PC-9 (cell line): ENCODE measurements at regions of chr5 and their contacts with region 1.

Region 1: GRCh38 chr5:149561848-149562247 is 10.6 kb upstream of the CSNK1A1 start:
- DNase-seq: peak; percentile 48 to 95
- H3K4me3 ChIP-seq: peak overlapping the region; percentile 43; the same call in 1 of the 2 replicates
- H3K27ac ChIP-seq: peak overlapping the region; percentile 97
- H3K4me1 ChIP-seq: peaks cover 53% of the 10 kb centered on the region
- H3K27me3 ChIP-seq: no peaks in the 10 kb centered on the region
- CTCF ChIP-seq: no peak

Region 2: GRCh38 chr5:148179234-148179824 is 1382.5 kb before region 1 on chr5:
- CTCF ChIA-PET with region 1: no interaction called
- POLR2A ChIA-PET with region 1: no interaction called
- intact Hi-C with region 1: loop called (anchors 5 kb)
- DNase-seq: peak; percentile 6 to 63
- H3K4me3 ChIP-seq: no peak overlapping the region
- H3K27ac ChIP-seq: no peak overlapping the region
- H3K4me1 ChIP-seq: no peaks in the 10 kb centered on the region
- H3K27me3 ChIP-seq: no peaks in the 10 kb centered on the region
- CTCF ChIP-seq: peak; percentile 84

Region 3: DNA sequence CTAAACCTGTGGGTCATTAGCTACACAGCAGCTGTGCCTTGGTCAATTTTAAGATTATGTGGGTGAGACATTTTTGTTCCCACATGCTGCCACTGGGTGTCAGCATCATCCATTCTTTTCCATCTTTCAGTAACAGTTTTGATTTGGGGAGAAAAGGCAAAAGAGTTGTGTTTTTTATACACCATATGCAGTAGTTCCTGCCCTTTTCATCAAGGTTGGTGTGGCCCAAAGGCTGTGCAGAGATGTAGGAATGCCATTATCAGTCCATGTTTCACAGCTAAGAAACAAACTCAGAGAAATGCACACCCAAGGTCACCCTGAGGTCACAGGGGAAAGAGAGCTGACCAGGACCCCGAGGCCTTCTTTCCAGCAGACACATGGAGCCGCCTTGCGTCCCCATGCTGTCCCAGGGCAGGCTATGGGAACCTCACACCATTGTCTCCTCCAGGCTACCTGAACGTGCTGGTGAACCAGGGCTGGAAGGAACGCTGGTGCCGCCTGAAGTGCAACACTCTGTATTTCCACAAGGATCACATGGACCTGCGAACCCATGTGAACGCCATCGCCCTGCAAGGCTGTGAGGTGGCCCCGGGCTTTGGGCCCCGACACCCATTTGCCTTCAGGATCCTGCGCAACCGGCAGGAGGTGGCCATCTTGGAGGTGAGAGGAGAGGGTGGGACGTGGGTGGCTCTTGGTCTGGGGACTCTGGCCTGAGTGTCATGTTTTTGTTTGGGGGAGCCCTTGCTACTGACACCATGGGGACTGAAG is 244.4 kb before region 1 on chr5:
- CTCF ChIA-PET with region 1: interaction called, 18 read pairs
- POLR2A ChIA-PET with region 1: no interaction called
- intact Hi-C with region 1: loop called (anchors 1 kb)
- DNase-seq: peak in 1 of 2 experiments; percentile 34
- H3K4me3 ChIP-seq: no peak overlapping the region
- H3K27ac ChIP-seq: no peak overlapping the region
- H3K4me1 ChIP-seq: peaks cover 3% of the 10 kb centered on the region; the same call in 1 of the 2 replicates
- H3K27me3 ChIP-seq: no peaks in the 10 kb centered on the region
- CTCF ChIP-seq: peak; percentile 79

Region 4: GRCh38 chr5:149367249-149367971 is 194.4 kb before region 1 on chr5:
- CTCF ChIA-PET with region 1: interaction called, 3 read pairs
- POLR2A ChIA-PET with region 1: interaction called, 3 read pairs
- intact Hi-C with region 1: loop called (anchors 1 kb)
- DNase-seq: peak; percentile 64 to 76
- H3K4me3 ChIP-seq: no peak overlapping the region
- H3K27ac ChIP-seq: no peak overlapping the region
- H3K4me1 ChIP-seq: no peaks in the 10 kb centered on the region
- H3K27me3 ChIP-seq: no peaks in the 10 kb centered on the region
- CTCF ChIP-seq: peak; percentile 84

Region 5: DNA sequence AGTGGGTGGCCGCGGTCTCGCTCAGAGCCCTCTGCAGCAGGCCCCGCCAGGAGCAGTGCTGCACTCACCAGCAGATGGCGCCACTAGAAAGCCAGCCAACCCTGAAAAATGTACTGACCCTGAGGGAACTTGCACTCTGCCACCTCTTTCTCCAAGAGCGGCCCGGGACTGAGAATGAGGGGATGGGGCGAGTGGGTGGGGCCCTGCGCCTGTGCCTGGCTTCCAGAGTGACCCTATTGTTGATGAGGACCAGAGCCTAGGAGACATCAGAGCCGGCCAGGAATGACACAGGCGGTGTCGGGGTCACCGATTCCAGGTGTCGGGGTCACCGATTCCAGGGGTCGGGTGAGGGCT is 179.9 kb before region 1 on chr5:
- CTCF ChIA-PET with region 1: no interaction called
- POLR2A ChIA-PET with region 1: no interaction called
- intact Hi-C with region 1: loop called (anchors 1 kb)
- DNase-seq: peak in 1 of 2 experiments; percentile 81
- H3K4me3 ChIP-seq: no peak overlapping the region
- H3K27ac ChIP-seq: no peak overlapping the region
- H3K4me1 ChIP-seq: no peaks in the 10 kb centered on the region
- H3K27me3 ChIP-seq: no peaks in the 10 kb centered on the region
- CTCF ChIP-seq: peak; percentile 94

Region 6: DNA sequence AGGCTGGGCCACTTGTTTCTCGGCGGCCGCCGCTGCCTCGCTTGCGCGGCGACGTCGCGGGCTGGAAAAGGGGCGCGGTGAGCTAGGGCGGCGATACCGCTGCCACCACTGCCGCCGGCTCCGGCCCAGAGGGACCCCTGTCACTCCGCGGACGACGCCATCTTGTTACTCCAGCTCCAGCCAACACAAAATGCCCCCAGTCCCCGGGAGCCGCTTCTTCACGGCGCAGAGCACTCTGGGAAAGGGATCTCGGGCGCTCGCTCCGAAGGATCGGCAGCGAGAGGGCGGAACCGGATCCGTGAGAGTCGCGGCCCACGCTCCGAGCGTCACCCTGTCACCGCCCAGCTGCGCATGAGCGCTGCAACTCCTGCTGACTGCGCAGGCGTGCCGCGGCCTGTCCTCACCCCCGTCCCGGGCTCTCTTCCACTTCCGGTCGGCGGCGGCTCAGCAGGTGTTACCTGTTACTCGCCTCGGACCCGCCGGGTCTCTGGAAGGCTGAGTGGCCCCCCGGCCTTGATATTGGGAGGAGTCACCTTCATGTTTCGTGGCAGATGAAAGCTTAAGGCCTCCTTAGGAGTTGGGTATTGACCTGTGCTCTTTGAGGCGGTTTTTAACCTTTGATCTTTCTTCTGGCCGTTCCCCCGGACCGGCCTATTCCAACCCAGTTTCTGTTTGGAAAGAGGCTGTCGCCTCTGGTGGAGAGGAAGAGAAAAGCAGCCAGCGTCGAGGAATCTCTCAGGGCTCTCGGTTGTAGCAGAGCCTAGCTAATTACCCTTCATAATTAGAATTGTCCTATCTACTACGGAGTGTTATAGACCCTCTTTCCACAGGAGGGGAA is 10.4 kb before region 1 on chr5 and contains the start of gene CSNK1A1:
- CTCF ChIA-PET with region 1: interaction called, 21 read pairs
- POLR2A ChIA-PET with region 1: interaction called, 11 read pairs
- intact Hi-C with region 1: loop called (anchors 1 kb)
- DNase-seq: peak; percentile 93 to 99
- H3K4me3 ChIP-seq: peak within 1 kb of the TSS; percentile 82
- H3K27ac ChIP-seq: peak within 1 kb of the TSS; percentile 86
- H3K4me1 ChIP-seq: peaks cover 57% of the 10 kb centered on the region
- H3K27me3 ChIP-seq: no peaks in the 10 kb centered on the region
- CTCF ChIP-seq: peak; percentile 88
- total RNA-seq, gene CSNK1A1: 300 and 334 TPM in 2 replicates